CD14-positive monocyte (primary cell): ENCODE measurements at regions of chr6 and their contacts with region 1.

Region 1: DNA sequence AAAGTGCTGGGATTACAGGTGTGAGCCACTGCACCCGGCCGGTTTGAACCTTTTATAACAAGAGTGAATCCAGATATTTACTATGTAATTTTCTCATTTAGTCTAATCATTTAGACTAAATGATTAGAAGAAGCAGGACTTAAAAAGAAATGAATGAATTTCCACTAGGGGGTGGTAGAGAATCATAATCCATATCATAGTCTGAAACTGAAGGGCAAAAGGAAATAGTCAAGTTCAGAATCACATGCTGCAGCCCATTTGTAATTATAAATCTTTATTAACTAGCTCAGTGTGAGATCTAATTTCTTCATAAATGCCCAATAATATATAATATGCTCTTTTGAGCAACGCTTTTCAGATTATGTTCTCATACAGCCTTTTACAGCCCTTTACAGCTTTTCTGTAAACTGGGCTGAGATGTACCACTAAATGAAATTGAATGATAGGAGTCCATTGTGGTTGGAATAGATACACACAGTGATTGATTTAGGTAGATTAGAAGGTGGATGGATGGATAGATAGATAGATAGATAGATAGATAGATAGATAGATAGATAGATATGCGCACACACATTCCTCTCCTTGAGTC is 31.8 kb downstream of the PSMB9 start:
- DNase-seq: peak; percentile 57 to 78 (median 67)
- H3K4me3 ChIP-seq: no peak overlapping the region
- H3K4me3 Mint-ChIP-seq: no peak overlapping the region
- H3K27ac ChIP-seq: no peak overlapping the region
- H3K27ac Mint-ChIP-seq: no peak overlapping the region
- H3K4me1 ChIP-seq: peaks cover 0 to 2% of the 10 kb centered on the region in 2 donors
- H3K4me1 Mint-ChIP-seq: peaks cover 14% of the 10 kb centered on the region
- H3K27me3 ChIP-seq: peaks cover under 1 to 2% of the 10 kb centered on the region in 2 donors
- H3K27me3 Mint-ChIP-seq: peaks cover 5 to 7% (median 7%) of the 10 kb centered on the region in 3 donors
- CTCF ChIP-seq: peak; percentile 78

Region 2: DNA sequence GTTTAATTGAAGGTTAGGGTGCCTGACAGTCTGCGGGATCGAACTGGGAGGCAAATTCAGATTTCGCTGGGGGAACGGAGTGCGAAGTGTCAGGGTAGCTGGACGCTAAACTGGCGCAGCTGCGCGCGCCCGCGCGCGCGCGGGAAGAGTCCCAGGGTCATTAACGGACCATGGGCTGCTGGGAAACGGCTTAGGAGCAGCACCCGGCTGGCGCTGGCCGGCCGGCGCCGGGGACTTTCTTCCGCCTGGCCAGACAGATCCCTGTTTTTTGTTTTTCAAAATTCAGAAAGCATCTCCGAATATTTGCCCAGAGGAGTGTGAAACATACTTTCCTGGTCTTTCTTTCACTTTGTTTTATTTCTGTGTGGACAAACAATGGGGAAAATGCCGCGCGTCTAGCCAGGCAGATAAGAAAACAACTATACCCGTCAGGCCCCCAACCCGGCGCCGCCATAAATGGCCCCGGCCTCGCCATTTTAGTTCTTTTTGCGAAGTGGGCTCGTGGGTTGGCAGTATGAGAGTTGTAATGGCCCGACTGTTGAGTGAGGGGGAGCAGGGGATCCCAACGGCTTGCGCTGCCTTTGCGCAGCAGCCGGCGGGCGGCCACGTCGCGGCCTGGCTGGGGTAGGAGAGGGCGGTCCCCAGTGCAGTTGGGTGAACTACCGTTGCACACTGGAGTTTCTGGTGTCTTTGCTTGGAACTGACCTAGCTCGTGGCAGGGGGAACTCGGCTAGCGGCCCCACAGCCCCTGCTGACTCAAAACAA is 1051.2 kb before region 1 on chr6:
- intact Hi-C with region 1: no loop called
- DNase-seq: peak; percentile 75 to 81 (median 77)
- H3K4me3 ChIP-seq: peak overlapping the region; percentile 83 to 89 (median 86)
- H3K4me3 Mint-ChIP-seq: peak overlapping the region; percentile 98 to 99
- H3K27ac ChIP-seq: peak overlapping the region; percentile 87 to 92
- H3K27ac Mint-ChIP-seq: peak overlapping the region; percentile 97 to 100 (median 98)
- H3K4me1 ChIP-seq: peaks cover 70 to 82% of the 10 kb centered on the region in 2 donors
- H3K4me1 Mint-ChIP-seq: peaks cover 56% of the 10 kb centered on the region
- H3K27me3 ChIP-seq: no peaks in the 10 kb centered on the region
- H3K27me3 Mint-ChIP-seq: no peaks in the 10 kb centered on the region
- CTCF ChIP-seq: no peak

Region 3: DNA sequence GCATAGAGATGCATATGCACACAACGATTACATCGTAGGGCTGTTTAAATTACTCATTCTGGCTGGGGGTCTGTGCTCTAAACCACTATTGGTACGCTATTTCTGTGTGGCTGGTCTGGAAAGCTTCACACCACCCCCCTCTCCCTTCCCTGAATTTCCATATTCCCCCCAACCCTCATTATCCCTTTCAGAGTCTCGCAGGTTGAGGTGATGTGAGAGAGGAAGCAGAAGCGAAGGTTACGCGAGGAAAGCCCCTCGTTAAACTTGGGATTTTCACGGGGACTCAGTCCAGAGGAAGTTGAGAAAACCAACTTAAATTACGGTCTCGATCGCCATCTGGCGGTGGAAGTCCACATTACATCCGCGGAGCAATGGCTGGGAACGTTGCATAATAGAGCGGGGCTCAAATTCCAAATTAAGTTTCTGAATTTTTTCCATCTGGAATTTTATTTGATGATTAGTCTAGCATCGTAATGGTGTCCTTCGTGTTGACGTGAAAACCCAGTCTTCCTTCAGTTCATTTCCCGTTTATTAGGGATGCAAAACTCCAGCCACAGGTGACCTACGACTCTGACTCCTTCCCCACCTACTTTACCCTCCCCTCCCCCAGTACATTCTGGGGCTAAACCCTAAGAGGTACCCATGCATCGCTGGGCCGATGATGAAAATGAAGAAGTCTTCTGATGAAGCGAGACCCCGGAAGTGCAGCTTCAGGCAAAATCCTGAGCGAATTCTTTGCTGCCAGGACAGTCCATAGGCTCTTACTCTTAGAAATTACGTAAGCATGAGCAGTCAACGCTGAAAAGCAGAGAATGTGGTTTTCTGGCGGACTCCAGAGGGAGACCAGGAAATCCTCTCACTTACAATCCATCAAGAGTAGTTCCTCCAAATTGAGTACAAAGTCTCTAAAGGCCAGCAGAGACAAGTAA is 88.7 kb before region 1 on chr6:
- intact Hi-C with region 1: no loop called
- DNase-seq: peak; percentile 65 to 88 (median 76)
- H3K4me3 ChIP-seq: peak overlapping the region; percentile 0 to 69 (median 31)
- H3K4me3 Mint-ChIP-seq: peak overlapping the region; percentile 72 to 93
- H3K27ac ChIP-seq: peak overlapping the region; percentile 8 to 42
- H3K27ac Mint-ChIP-seq: peak overlapping the region; percentile 62 to 90 (median 87)
- H3K4me1 ChIP-seq: peaks cover 43 to 46% of the 10 kb centered on the region in 2 donors
- H3K4me1 Mint-ChIP-seq: peaks cover 43% of the 10 kb centered on the region
- H3K27me3 ChIP-seq: peaks cover 0 to 5% of the 10 kb centered on the region in 2 donors
- H3K27me3 Mint-ChIP-seq: peaks cover 0 to 4% (median 3%) of the 10 kb centered on the region in 3 donors
- CTCF ChIP-seq: peak; percentile 92

Region 4: DNA sequence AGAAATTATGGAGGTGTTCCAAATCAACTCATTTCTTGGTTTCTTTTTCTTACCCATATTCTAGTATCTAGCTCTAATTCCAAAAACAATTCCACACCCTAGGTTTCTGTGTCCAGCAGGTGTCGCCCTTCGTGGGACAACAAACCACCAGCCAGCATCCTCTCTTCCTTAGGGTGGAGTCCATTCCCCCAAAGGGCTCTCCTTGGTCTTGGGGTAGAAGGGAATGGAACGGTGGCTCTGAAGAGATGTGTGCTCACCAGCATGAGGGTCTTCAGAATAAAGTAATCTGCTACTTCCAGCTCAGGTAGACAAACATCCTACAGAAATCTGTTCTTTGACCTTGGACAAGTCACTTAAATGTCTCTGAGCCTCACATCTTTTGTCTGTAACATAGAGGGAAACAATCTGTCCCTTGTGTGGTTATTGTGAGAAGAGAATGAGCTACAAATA is 47.9 kb after region 1 on chr6:
- intact Hi-C with region 1: loop called (anchors 5 kb)
- DNase-seq: peak; percentile 58 to 78 (median 76)
- H3K4me3 ChIP-seq: no peak overlapping the region
- H3K4me3 Mint-ChIP-seq: no peak overlapping the region
- H3K27ac ChIP-seq: peak overlapping the region in 1 of 2 donors; percentile 5
- H3K27ac Mint-ChIP-seq: peak overlapping the region in 5 of 7 donors; percentile 22 to 79 (median 37)
- H3K4me1 ChIP-seq: peaks cover 61 to 68% of the 10 kb centered on the region in 2 donors
- H3K4me1 Mint-ChIP-seq: peaks cover 75% of the 10 kb centered on the region
- H3K27me3 ChIP-seq: no peaks in the 10 kb centered on the region
- H3K27me3 Mint-ChIP-seq: peaks cover 0 to 1% (median 1%) of the 10 kb centered on the region in 3 donors
- CTCF ChIP-seq: peak; percentile 88

Region 5: DNA sequence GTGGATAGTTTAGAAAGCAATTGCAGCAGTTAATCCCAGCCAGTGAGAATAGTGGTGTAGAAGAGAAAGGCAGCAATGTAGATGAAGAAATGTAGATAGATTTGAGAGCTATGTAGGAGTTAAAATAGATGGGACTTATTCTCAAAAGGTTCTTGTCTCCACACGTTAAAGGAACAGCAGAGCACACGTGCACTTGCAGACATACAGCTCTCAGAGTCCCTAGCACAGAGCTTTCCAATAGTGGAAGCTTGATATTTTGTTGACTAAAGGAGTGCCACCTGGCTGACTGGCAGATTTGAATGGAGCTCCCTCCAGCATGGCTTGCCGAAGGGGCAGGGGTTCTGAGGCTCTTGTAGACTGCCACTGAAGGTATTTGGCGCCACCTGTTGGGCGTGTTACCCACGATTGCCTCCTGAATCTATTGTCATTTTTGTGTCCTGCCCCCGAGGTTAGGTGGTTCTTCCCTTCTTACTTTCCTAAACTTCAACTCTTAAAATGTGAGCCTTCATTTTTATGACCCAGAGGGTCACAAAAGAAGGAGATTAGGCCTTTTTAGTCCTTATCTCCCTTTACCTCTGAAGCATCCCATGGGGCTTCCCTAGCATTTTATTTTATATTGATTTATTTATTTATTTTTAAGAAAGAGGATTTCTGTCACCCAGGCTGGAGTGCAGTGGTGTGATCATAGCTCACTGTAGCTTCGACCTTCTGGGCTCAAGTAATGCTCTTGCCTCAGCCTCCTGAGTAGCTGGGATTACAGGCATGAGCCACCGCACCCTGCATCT is 99.0 kb after region 1 on chr6:
- intact Hi-C with region 1: loop called (anchors 1 to 2 kb)
- DNase-seq: peak; percentile 79 to 84 (median 84)
- H3K4me3 ChIP-seq: no peak overlapping the region
- H3K4me3 Mint-ChIP-seq: no peak overlapping the region
- H3K27ac ChIP-seq: peak overlapping the region in 1 of 2 donors; percentile 20
- H3K27ac Mint-ChIP-seq: peak overlapping the region in 3 of 7 donors; percentile 7 to 69 (median 43)
- H3K4me1 ChIP-seq: no peaks in the 10 kb centered on the region
- H3K4me1 Mint-ChIP-seq: peaks cover 24% of the 10 kb centered on the region
- H3K27me3 ChIP-seq: no peaks in the 10 kb centered on the region
- H3K27me3 Mint-ChIP-seq: peaks cover 0 to 4% (median 0%) of the 10 kb centered on the region in 3 donors
- CTCF ChIP-seq: peak; percentile 96

Region 6: GRCh38 chr6:33008944-33009861 is 123.4 kb after region 1 on chr6 and contains the start of gene HLA-DOA:
- intact Hi-C with region 1: no loop called
- DNase-seq: peak in 1 of 3 donors; percentile 33
- H3K4me3 ChIP-seq: peak within 1 kb of the TSS; percentile 33 to 68 (median 46)
- H3K4me3 Mint-ChIP-seq: peak within 1 kb of the TSS; percentile 76 to 90
- H3K27ac ChIP-seq: peak within 1 kb of the TSS in 1 of 2 donors; percentile 57
- H3K27ac Mint-ChIP-seq: peak within 1 kb of the TSS in 6 of 7 donors; percentile 31 to 88 (median 72)
- H3K4me1 ChIP-seq: peaks cover 9 to 21% of the 10 kb centered on the region in 2 donors
- H3K4me1 Mint-ChIP-seq: peaks cover 15% of the 10 kb centered on the region
- H3K27me3 ChIP-seq: no peaks in the 10 kb centered on the region
- H3K27me3 Mint-ChIP-seq: peaks cover 4 to 9% (median 8%) of the 10 kb centered on the region in 3 donors
- CTCF ChIP-seq: no peak
- polyA plus RNA-seq, gene HLA-DOA: 2.8 to 15.4 (median 9.1) TPM